Naive thymus-derived CD4-positive, alpha-beta T cell (primary cell): ENCODE measurements at regions of chr16 and their contacts with region 1.

Region 1: DNA sequence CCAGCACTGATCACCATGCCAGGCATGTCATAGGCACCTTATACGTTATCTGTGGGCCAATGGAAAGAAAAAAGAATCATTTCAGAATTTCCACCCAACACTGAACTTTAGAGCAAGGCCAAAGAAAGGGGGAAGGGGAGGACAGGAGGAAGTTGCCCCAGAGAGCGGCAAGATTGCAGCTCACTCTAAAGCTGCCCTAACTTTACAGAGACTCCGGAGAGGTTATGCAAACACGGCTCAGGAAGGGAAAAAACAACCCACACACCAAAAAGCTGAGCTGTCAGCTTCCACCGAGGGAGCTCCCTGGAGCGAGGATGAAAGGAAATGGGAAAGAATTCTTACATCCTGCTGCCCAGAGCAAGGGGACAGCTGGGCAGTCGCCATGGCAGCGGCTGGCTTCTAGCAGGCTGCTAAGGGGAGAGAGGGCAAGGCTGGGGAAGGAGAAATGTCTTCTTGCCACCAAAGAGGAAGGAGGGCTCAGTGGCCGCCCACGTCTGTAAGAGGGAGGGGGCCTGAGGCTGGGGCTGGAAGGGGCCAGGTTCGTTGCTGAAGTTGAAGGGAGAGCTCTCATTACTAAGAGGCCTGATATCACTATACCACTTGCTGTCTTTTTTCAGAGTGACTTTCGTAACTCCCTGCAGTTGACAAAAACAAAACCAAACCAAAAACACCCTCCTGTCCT is 18.2 kb downstream of the COTL1 start:
- DNase-seq: peak in 6 of 9 donors; percentile 41 to 78 (median 50)
- ATAC-seq: peak; percentile 39
- H3K4me3 ChIP-seq: peak overlapping the region; percentile 44
- H3K4me3 Mint-ChIP-seq: peak overlapping the region; percentile 78 to 94 (median 87)
- H3K27ac ChIP-seq: peak overlapping the region; percentile 87
- H3K27ac Mint-ChIP-seq: peak overlapping the region; percentile 90 to 98 (median 97)
- H3K4me1 ChIP-seq: peaks cover 82 to 90% of the 10 kb centered on the region in 2 donors
- H3K4me1 Mint-ChIP-seq: peaks cover 73 to 94% (median 88%) of the 10 kb centered on the region in 7 donors
- H3K27me3 ChIP-seq: no peaks in the 10 kb centered on the region
- H3K27me3 Mint-ChIP-seq: peaks cover 0 to 4% (median 0%) of the 10 kb centered on the region in 5 donors

Region 2: GRCh38 chr16:84260766-84261554 is 338.7 kb before region 1 on chr16:
- CTCF ChIA-PET with region 1: no interaction called
- POLR2A ChIA-PET with region 1: no interaction called
- intact Hi-C with region 1: no loop called
- DNase-seq: no peak
- ATAC-seq: no peak
- H3K4me3 ChIP-seq: no peak overlapping the region
- H3K4me3 Mint-ChIP-seq: no peak overlapping the region
- H3K27ac ChIP-seq: no peak overlapping the region
- H3K27ac Mint-ChIP-seq: no peak overlapping the region
- H3K4me1 ChIP-seq: no peaks in the 10 kb centered on the region
- H3K4me1 Mint-ChIP-seq: no peaks in the 10 kb centered on the region
- H3K27me3 ChIP-seq: no peaks in the 10 kb centered on the region
- H3K27me3 Mint-ChIP-seq: peaks cover 5 to 32% (median 20%) of the 10 kb centered on the region in 5 donors

Region 3: DNA sequence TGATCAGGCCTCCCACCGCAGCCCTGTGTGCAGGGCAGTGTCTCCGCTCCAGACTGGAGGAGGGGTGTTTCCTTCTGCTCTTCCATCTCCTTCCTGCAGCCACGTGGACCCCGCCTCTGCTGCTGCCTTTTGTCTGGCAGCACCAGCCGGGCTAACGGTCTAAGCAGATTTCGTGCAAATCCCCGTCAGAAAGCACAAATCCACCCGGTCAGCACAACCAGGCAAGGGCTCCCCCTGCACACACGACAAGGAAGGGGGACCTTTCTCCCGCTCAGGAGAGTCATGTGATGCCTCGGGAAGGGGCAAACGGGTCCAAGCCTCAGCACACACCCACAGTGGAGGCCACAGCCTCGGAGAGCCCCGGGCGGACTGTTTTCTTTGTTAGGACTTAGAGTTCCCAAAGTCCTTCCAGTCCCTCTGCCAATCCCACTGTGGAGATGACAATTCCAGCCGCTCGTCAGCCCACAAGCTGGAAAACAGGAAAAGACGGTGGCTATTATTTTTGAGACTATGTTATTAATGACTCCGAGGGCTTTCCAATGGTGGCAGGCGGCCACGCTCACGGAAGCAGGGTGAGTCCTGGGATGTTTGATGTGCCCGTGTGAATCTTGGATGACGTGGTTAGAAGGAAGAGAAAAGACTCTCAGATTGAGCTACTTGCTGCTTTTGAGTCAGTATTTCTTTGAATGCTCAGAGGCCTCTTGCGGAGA is 72.7 kb before region 1 on chr16:
- CTCF ChIA-PET with region 1: no interaction called
- POLR2A ChIA-PET with region 1: no interaction called
- intact Hi-C with region 1: no loop called
- DNase-seq: no peak
- ATAC-seq: no peak
- H3K4me3 ChIP-seq: no peak overlapping the region
- H3K4me3 Mint-ChIP-seq: no peak overlapping the region
- H3K27ac ChIP-seq: no peak overlapping the region
- H3K27ac Mint-ChIP-seq: peak overlapping the region in 1 of 9 donors; percentile 71
- H3K4me1 ChIP-seq: no peaks in the 10 kb centered on the region
- H3K4me1 Mint-ChIP-seq: peaks cover 0 to 26% (median 11%) of the 10 kb centered on the region in 7 donors
- H3K27me3 ChIP-seq: no peaks in the 10 kb centered on the region
- H3K27me3 Mint-ChIP-seq: no peaks in the 10 kb centered on the region

Region 4: DNA sequence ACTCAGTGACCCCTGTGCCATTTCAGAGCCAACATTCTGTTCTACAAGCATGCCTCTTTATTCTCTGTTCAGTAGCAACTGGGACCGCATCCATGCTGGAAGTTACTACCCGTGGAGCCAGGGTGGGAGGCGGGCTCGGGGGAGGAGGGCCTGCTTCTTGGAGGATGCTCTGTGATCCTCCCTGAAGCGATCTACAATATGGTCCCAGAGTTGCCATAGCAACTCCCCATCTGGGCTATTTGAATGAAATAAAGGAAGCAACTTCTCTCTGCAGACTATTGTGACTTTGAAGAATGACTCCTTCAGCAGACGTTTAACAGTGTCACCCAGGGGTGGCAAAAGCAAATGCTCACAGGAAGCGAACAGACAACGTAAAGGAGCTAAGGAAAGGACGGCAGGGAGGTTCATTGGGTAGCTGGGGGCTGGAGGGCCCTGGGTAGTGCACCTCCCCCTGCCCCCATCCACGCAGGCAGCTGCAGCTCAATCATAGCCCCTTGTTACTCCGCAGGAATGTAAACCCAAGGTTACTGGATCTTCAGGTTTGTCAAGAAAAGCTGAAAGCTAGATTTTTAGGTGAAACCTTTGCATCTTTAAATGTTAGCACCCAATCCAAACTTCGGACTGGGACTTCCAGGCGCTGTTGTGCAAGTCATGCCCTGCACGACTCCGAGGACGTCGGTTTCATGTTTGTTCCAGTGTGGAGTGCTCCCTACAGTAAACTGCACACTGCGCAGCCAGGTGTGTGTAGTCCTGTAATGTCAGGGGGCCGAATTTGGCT is 44.1 kb before region 1 on chr16:
- CTCF ChIA-PET with region 1: interaction called, 10 read pairs
- POLR2A ChIA-PET with region 1: interaction called, 16 read pairs
- intact Hi-C with region 1: loop called (anchors 1 kb)
- DNase-seq: peak in 5 of 9 donors; percentile 11 to 42 (median 34)
- ATAC-seq: no peak
- H3K4me3 ChIP-seq: no peak overlapping the region
- H3K4me3 Mint-ChIP-seq: peak overlapping the region in 6 of 10 donors; percentile 4 to 59 (median 32)
- H3K27ac ChIP-seq: peak overlapping the region; percentile 17
- H3K27ac Mint-ChIP-seq: peak overlapping the region in 8 of 9 donors; percentile 28 to 76 (median 66)
- H3K4me1 ChIP-seq: peaks cover 32 to 37% of the 10 kb centered on the region in 2 donors
- H3K4me1 Mint-ChIP-seq: peaks cover 13 to 52% (median 42%) of the 10 kb centered on the region in 7 donors
- H3K27me3 ChIP-seq: no peaks in the 10 kb centered on the region
- H3K27me3 Mint-ChIP-seq: no peaks in the 10 kb centered on the region